Heart left ventricle (tissue), 16 donors: ENCODE measurements at regions of chr17 and their contacts with region 1.

Region 1: GRCh38 chr17:73237714-73238113 is 24.0 kb downstream of the CPSF4L start:
- DNase-seq: no peak
- ATAC-seq: no peak
- H3K4me3 ChIP-seq: no peak overlapping the region
- H3K27ac ChIP-seq: no peak overlapping the region
- H3K4me1 ChIP-seq: peaks cover 0 to 41% (median 18%) of the 10 kb centered on the region in 12 donors
- H3K27me3 ChIP-seq: no peaks in the 10 kb centered on the region
- CTCF ChIP-seq: no peak
- POLR2A ChIP-seq: no peak

Region 2: GRCh38 chr17:72734613-72735012 is 503.1 kb before region 1 on chr17:
- intact Hi-C with region 1: loop called in 4 of 10 experiments (anchors 5 to 10 kb)
- DNase-seq: no peak
- ATAC-seq: no peak
- H3K4me3 ChIP-seq: no peak overlapping the region
- H3K27ac ChIP-seq: no peak overlapping the region
- H3K4me1 ChIP-seq: no peaks in the 10 kb centered on the region
- H3K27me3 ChIP-seq: no peaks in the 10 kb centered on the region
- CTCF ChIP-seq: no peak
- POLR2A ChIP-seq: no peak

Region 3: DNA sequence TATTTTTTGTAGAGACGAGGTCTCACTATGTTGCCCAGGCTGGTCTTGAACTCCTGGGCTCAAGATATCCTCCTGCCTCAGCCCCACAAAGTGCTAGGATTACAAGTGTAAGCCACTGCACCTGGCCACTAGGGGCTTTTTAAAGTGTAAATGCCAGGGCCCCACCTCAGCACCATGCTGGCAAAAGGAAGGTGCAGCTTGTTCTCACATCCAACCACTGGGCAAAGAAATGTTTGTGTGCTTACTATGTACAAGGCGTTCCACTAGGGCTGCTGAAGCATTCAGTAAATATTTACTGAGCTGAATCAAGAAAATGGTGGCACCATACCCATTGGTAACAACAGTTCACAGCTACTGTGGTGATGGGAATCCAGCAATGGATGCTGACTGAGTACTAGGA is 22.3 kb before region 1 on chr17:
- intact Hi-C with region 1: no loop called
- DNase-seq: no peak
- ATAC-seq: no peak
- H3K4me3 ChIP-seq: no peak overlapping the region
- H3K27ac ChIP-seq: no peak overlapping the region
- H3K4me1 ChIP-seq: peaks cover 0 to 10% (median 0%) of the 10 kb centered on the region in 12 donors
- H3K27me3 ChIP-seq: no peaks in the 10 kb centered on the region
- CTCF ChIP-seq: peak in 1 of 12 donors; percentile 5
- POLR2A ChIP-seq: no peak

Region 4: DNA sequence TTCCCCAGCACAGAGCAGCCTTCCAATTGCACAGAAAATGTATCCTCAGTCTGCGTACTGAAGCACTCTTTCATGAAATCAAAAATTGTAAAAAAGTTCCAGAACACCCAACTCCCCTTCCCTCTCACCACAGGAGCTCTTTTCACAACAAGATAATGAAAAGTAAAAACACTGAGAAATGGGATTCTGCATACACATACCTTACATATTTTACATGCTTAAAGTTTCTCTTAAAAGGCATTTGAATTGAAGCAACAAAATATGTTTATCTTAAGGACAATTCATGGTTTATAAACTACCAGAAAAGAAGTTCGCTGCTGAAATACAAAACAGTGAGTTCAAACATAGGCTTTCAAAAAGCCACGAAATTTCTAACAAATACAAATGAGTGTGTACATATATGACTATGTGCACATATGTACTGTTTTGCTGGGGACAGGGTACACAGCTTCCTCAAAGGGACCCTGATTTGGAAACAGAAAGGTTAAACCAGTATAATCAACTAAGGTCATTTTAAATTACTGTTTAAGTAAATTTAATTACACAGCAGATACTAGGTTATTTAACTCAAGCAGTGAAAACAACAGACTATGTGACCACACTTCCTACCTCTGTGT is 11.1 kb before region 1 on chr17:
- intact Hi-C with region 1: no loop called
- DNase-seq: no peak
- ATAC-seq: no peak
- H3K4me3 ChIP-seq: no peak overlapping the region
- H3K27ac ChIP-seq: peak overlapping the region in 1 of 12 donors; percentile 68
- H3K4me1 ChIP-seq: peaks cover 5 to 61% (median 44%) of the 10 kb centered on the region in 12 donors
- H3K27me3 ChIP-seq: no peaks in the 10 kb centered on the region
- CTCF ChIP-seq: no peak
- POLR2A ChIP-seq: no peak

Region 5: GRCh38 chr17:73325527-73325842 is 87.8 kb after region 1 on chr17:
- intact Hi-C with region 1: no loop called
- DNase-seq: peak in 2 of 5 donors; percentile 43 to 44
- ATAC-seq: peak in 3 of 4 donors; percentile 66 to 79 (median 67)
- H3K4me3 ChIP-seq: no peak overlapping the region
- H3K27ac ChIP-seq: peak overlapping the region in 1 of 12 donors; percentile 33
- H3K4me1 ChIP-seq: peaks cover 0 to 28% (median 7%) of the 10 kb centered on the region in 12 donors
- H3K27me3 ChIP-seq: no peaks in the 10 kb centered on the region
- CTCF ChIP-seq: peak in 4 of 12 donors; percentile 13 to 37 (median 19)
- POLR2A ChIP-seq: no peak